HEK293 (cell line): ENCODE measurements at regions of chr17 and their contacts with region 1.

Region 1: DNA sequence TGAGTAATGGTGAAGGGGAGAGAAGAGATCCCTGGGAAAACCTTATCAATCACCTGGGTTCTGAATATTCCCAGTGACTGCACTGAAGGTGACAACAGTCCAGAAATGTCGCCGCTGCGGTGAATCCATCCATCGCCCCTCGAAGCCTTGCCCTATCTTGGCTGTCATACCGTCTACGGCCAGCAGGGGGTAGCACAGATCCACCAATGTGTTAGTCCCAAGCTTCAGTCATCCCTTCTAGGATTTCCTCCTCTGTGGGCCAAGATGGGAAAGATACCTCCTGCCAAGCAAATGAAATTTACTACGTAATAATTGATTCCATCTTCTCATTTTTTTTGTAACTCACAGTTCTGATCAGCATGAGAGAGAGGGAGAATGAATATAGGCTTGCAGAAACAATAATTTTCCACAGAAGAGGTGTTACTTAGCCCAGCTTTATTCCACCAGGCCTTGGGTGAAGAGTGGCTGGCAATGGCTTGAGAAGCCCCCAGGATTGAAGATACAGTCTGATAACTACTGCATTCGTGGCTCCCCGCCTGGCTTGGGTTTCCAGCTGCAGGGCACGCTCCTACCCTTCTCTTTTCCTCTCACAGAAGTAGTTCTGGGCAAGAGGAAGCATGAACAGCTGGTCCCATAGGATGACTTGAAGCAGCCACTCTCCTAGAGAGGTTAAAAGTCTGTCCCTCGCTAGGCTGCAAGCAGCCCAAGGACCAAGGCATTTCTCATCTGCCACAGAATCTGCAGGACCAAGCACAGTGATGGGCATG is 2.6 kb upstream of the FMNL1 start:
- H3K4me3 ChIP-seq: no peak overlapping the region
- H3K27ac ChIP-seq: no peak overlapping the region
- H3K4me1 ChIP-seq: no peaks in the 10 kb centered on the region; the same call in 1 of the 2 replicates
- CTCF ChIP-seq: peak; percentile 83

Region 2: GRCh38 chr17:44664867-44665266 is 554.2 kb before region 1 on chr17:
- CTCF ChIA-PET with region 1: no interaction called
- POLR2A ChIA-PET with region 1: no interaction called
- H3K4me3 ChIP-seq: no peak overlapping the region
- H3K27ac ChIP-seq: no peak overlapping the region
- H3K4me1 ChIP-seq: no peaks in the 10 kb centered on the region
- CTCF ChIP-seq: no peak

Region 3: GRCh38 chr17:45235416-45236281 is 16.6 kb after region 1 on chr17:
- CTCF ChIA-PET with region 1: interaction called, 192 read pairs
- POLR2A ChIA-PET with region 1: interaction called, 4 read pairs
- H3K4me3 ChIP-seq: no peak overlapping the region
- H3K27ac ChIP-seq: no peak overlapping the region
- H3K4me1 ChIP-seq: no peaks in the 10 kb centered on the region
- CTCF ChIP-seq: peak; percentile 66

Region 4: DNA sequence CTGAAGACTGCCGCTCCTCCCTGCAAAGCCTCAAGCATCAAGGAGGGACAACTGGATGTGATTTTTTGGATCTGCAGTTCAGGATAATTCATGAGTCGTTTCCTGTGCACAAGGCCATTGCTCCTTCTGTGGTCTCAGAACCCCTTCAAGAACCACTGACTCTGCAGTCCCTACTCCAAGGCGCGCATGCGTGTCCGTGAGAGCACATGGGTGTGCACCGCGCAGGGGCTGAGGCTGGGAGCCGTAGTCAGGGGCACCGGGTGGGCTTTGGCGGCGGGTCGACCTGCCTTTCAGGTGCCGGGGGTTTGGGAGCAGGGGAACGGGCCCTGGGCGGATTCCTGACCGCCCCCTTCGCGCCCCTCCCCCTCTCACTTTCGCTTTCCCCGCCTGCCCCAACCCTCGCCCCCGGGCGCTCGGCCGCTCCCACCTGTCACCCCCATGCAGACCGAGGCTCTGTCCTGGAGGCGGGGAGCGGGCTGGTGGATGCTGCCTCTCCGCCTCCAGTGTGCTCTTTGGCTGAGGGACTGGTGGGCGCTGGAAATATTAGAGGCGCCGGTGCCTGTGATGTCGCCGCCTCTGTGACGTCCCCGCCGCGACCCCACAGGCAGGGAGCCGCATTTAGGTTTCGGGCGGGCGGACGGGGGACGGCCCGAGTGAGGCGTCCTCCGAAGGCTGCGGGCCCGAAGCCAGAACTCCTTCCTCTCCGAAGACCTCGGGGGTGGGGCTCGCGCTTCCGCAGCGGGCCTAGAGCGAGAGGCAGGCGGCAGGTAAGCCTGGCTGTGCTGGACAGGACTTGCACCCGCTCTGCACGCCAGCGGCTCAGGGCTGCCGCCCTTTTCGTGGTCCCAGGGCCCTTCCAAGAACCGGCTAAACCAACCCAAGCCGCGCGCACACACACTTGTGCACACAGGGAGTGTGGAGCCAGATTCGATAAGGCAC is 42.8 kb after region 1 on chr17 and contains the start of gene SPATA32:
- CTCF ChIA-PET with region 1: interaction called, 19 read pairs
- POLR2A ChIA-PET with region 1: no interaction called
- H3K4me3 ChIP-seq: no peak within 1 kb of the TSS
- H3K27ac ChIP-seq: no peak within 1 kb of the TSS
- H3K4me1 ChIP-seq: no peaks in the 10 kb centered on the region
- CTCF ChIP-seq: no peak

Region 5: DNA sequence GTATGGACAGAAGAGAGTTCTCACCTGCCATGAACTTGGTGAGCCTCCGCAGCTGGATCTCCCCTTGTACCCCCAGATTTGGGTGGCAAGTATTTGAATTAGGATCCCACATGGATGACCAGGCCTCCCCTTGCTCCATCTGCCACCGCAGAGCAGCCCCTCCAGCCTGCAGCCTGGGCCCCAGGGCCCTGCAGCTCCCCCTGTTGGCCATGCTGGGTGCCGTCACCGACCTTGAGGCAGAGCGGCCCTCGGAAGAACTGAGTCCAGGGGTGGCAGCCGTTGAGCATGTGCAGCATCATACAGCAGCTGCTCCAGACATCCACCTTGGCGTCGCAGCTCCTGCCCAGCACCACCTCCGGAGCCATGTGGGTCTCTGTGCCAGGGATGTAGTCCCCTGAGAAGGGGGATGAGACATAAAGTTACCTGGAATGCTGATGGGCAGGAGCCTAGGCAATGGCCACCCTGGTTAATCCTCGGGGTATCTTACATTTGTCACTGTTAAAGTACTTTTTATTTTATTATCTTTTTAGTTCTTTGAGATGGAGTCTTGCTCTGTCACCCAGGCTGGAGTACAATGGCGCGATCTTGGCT is 51.8 kb after region 1 on chr17:
- CTCF ChIA-PET with region 1: interaction called, 39 read pairs
- POLR2A ChIA-PET with region 1: interaction called, 3 read pairs
- H3K4me3 ChIP-seq: no peak overlapping the region
- H3K27ac ChIP-seq: no peak overlapping the region
- H3K4me1 ChIP-seq: no peaks in the 10 kb centered on the region
- CTCF ChIP-seq: peak; percentile 62

Region 6: GRCh38 chr17:45307290-45308015 is 88.4 kb after region 1 on chr17:
- CTCF ChIA-PET with region 1: interaction called, 21 read pairs
- POLR2A ChIA-PET with region 1: no interaction called
- H3K4me3 ChIP-seq: no peak overlapping the region
- H3K27ac ChIP-seq: peak overlapping the region; percentile 35; the same call in 1 of the 2 replicates
- H3K4me1 ChIP-seq: peaks cover 31% of the 10 kb centered on the region
- CTCF ChIP-seq: no peak

Region 7: GRCh38 chr17:45394913-45395568 is 176.0 kb after region 1 on chr17:
- CTCF ChIA-PET with region 1: interaction called, 31 read pairs
- POLR2A ChIA-PET with region 1: no interaction called
- H3K4me3 ChIP-seq: no peak overlapping the region
- H3K27ac ChIP-seq: no peak overlapping the region
- H3K4me1 ChIP-seq: no peaks in the 10 kb centered on the region
- CTCF ChIP-seq: peak; percentile 74

Region 8: DNA sequence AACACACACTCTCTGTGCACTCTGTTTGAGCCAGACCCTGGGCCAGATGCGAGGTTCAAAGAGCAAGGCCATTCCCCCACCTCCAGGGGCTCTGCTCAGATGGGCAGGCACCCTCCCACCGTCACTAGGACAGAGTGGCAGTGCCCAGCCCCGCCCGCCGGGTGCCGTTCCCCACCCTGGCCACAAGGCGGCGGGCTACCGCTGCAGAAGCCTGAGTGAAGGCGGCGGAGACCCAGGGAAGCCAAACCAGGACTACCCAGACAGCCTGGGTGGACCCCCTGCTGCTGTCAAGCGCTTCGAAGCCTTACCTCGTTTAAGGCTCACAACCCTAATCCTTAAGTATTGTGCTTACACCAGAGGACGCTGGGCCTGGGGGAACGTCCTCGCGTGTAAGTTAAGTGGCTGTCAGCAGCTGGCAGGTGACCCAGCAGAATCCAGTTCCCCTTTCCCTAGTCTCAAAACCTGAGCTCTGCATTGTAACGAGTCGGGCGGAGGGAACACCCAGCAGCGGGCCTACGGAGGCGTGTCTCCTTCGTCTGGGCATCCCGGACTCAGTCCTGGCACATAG is 209.1 kb after region 1 on chr17:
- CTCF ChIA-PET with region 1: interaction called, 41 read pairs
- POLR2A ChIA-PET with region 1: interaction called, 6 read pairs
- H3K4me3 ChIP-seq: no peak overlapping the region
- H3K27ac ChIP-seq: no peak overlapping the region
- H3K4me1 ChIP-seq: peaks cover 15% of the 10 kb centered on the region
- CTCF ChIP-seq: peak; percentile 91